MCF 10A (cell line): ENCODE measurements at regions of chr11 and their contacts with region 1.

Region 1: DNA sequence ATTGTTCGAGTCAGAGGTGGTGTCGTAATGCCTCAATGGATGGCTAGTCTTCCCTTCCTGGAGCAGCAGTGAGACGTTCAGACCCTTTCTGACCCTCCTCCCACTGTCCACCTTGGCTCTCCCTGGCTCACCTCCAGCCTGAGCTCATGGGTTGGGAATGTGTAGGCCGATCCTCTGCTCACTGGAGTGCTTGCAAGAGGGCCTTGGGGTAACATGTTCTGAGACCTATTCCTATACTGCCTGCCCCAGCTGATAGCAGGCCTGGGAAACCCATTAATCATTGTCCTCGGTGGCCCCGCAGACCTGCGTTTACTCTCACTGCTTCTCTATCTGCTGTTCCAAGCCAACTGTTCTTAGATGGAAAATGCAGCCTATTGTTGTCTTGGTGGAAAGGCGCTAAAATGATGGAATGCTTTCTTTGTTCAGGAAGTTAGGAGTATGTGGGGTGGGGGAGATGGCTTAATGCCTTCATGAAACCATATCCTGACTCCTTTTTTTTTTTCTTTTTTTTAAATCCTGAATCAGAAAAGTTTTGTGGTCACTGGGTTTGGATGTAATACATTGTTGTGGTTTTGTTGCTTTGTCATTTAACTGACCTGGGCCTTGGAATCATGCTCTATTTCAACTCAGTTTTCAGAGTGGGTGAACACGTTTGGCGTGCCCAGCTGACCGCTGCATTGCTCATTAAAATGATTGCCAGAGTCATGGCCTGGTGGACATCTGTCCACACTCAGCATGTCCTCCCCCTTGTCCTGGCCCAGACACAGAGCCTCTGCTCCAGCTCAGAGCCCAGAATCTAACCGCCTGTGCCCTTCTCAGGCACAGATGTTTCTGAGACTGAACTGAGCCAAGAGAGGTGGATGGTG is 72.5 kb downstream of the MICAL2 start:
- DNase-seq: peak; percentile 97
- H3K4me3 Mint-ChIP-seq: no peak overlapping the region
- H3K27ac Mint-ChIP-seq: peak overlapping the region; percentile 82
- H3K4me1 Mint-ChIP-seq: peaks cover 46% of the 10 kb centered on the region
- H3K27me3 Mint-ChIP-seq: no peaks in the 10 kb centered on the region
- CTCF ChIP-seq: no peak

Region 2: DNA sequence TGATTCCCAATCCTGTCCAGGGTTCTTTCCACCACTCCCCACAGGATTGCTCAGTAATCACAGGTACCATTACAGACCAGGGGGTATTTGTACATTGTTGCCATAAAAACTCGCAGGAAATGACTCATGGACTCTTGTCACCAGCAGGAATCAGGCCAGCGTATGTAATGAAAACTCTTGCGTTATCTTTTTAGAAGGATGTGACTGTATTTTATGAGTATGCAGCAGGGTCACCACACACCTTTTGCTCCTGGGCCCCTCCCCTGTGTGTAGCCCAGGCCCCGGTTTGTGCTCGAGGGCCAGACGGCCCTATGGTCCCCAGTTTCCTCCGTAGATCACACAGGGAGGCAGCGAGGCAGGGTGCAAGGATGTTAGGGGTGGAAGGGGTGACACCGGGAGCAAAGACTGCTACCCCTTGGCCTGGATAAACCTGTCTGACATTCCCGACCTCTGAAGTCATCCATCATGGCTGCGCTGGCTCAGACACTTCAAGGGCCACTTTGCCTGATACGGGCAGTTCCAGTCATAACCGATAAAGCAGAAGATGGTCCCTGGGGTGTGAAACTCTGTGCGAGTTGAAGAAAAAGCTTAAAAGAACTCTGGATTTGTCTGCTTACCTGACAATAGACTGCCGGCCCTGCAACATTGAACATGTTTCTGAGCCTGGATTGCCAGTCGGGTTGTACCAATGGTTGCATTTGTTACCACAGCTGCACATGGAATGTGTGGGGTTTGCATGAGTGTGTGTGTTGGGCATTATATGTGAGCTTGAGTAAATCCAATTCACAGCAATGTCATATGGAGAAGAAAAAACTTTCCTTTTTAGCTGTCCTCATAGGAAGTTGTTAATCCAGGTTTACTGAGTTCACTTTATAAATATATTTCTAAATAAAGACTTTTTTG is 15.6 kb before region 1 on chr11:
- CTCF ChIA-PET with region 1: interaction called, 3 read pairs
- POLR2A ChIA-PET with region 1: interaction called, 19 read pairs
- intact Hi-C with region 1: no loop called
- DNase-seq: peak; percentile 93
- H3K4me3 Mint-ChIP-seq: no peak overlapping the region
- H3K27ac Mint-ChIP-seq: peak overlapping the region; percentile 8
- H3K4me1 Mint-ChIP-seq: peaks cover 49% of the 10 kb centered on the region
- H3K27me3 Mint-ChIP-seq: no peaks in the 10 kb centered on the region
- CTCF ChIP-seq: no peak